ENCODE measurements at regions of chr1 and their contacts with region 1.

Region 1: DNA sequence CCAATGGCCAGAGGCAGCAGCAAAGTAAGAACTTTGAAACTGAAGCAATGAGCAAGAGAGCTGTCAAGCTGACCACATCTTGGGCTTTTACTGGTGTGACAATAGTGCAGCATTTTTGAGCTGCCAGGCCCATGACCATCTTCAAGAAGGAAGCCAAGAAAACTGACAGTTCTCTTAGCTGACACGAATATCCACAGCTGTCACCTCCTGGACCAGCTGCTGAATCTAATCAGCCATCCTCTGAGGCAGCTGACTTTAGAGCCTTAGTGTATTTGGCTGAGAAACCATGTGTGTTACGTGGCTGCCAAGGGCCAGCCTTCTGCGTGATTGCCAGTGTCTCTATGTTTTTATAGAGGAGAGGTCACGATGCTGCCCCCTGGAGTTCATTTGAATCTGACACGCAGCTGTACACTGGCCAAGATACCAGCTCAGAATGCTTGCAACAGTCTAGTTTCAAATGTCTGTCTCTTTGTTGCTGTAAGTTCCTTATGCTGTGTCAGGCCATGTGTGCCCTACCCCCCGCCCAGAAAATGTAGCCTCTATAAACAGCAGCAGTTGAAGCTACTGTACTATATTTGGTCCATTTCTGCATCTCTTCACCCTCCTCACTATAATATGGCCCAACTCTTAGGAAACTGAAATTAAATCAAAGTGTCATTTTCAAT is 39.7 kb downstream of the PALMD start:
- DNase-seq: peak; percentile 70
- ATAC-seq: peak; percentile 89

Region 2: GRCh38 chr1:99533909-99534637 is 151.6 kb before region 1 on chr1:
- intact Hi-C with region 1: loop called (anchors 5 kb)
- DNase-seq: no peak
- ATAC-seq: peak; percentile 62

Region 3: GRCh38 chr1:99672500-99673213 is 13.0 kb before region 1 on chr1:
- intact Hi-C with region 1: no loop called
- DNase-seq: peak; percentile 57
- ATAC-seq: peak; percentile 86

Region 4: GRCh38 chr1:99737016-99737415 is 51.4 kb after region 1 on chr1:
- intact Hi-C with region 1: no loop called
- DNase-seq: no peak
- ATAC-seq: peak; percentile 69

Measured in Right ventricle myocardium inferior (tissue), 1 donor.